ENCODE measurements at regions of chr2 and their contacts with region 1.

Region 1: GRCh38 chr2:201071479-201072200 is at the starts of genes HYCC2 and NDUFB3:
- DNase-seq: peak; percentile 93
- ATAC-seq: peak; percentile 98
- H3K4me3 ChIP-seq: peak within 1 kb of the TSS; percentile 94
- H3K27ac ChIP-seq: peak within 1 kb of the TSS; percentile 68
- H3K4me1 ChIP-seq: no peaks in the 10 kb centered on the region
- H3K27me3 ChIP-seq: no peaks in the 10 kb centered on the region
- CTCF ChIP-seq: no peak; the same call in 1 of the 2 replicates
- POLR2A ChIP-seq: 0 out of 2 replicates have a peak, but pooled peaks have one; percentile 30
- RAD21 ChIP-seq: peak; percentile 23; the same call in 1 of the 2 replicates
- total RNA-seq, gene HYCC2: 9.1 and 10.0 TPM in 2 replicates
- total RNA-seq, gene NDUFB3: 41.0 and 105 TPM in 2 replicates

Region 2: GRCh38 chr2:200901459-200902072 is 170.1 kb before region 1 on chr2:
- CTCF ChIA-PET with region 1: interaction called, 12 read pairs
- POLR2A ChIA-PET with region 1: no interaction called
- dilution Hi-C with region 1: no loop called
- in situ Hi-C with region 1: loop called (anchors 5 kb)
- intact Hi-C with region 1: loop called (anchors 1 kb)
- DNase-seq: peak; percentile 90
- ATAC-seq: peak; percentile 98
- H3K4me3 ChIP-seq: no peak overlapping the region
- H3K27ac ChIP-seq: no peak overlapping the region
- H3K4me1 ChIP-seq: no peaks in the 10 kb centered on the region
- H3K27me3 ChIP-seq: no peaks in the 10 kb centered on the region
- CTCF ChIP-seq: peak; percentile 93
- POLR2A ChIP-seq: no peak
- RAD21 ChIP-seq: peak; percentile 83

Region 3: GRCh38 chr2:201021914-201022313 is 49.7 kb before region 1 on chr2:
- CTCF ChIA-PET with region 1: no interaction called
- POLR2A ChIA-PET with region 1: no interaction called
- dilution Hi-C with region 1: no loop called
- in situ Hi-C with region 1: no loop called
- intact Hi-C with region 1: no loop called
- DNase-seq: no peak
- ATAC-seq: no peak; the same call in 1 of the 2 replicates
- H3K4me3 ChIP-seq: no peak overlapping the region
- H3K27ac ChIP-seq: no peak overlapping the region
- H3K4me1 ChIP-seq: peaks cover under 1% of the 10 kb centered on the region; the same call in 1 of the 2 replicates
- H3K27me3 ChIP-seq: no peaks in the 10 kb centered on the region
- CTCF ChIP-seq: no peak
- POLR2A ChIP-seq: no peak
- RAD21 ChIP-seq: no peak

Region 4: GRCh38 chr2:201118121-201118960 is 46.7 kb after region 1 on chr2:
- CTCF ChIA-PET with region 1: no interaction called
- POLR2A ChIA-PET with region 1: no interaction called
- dilution Hi-C with region 1: no loop called
- in situ Hi-C with region 1: no loop called
- intact Hi-C with region 1: loop called (anchors 5 kb)
- DNase-seq: peak; percentile 78
- ATAC-seq: peak; percentile 35
- H3K4me3 ChIP-seq: peak overlapping the region; percentile 64
- H3K27ac ChIP-seq: peak overlapping the region; percentile 92
- H3K4me1 ChIP-seq: peaks cover 4% of the 10 kb centered on the region
- H3K27me3 ChIP-seq: no peaks in the 10 kb centered on the region
- CTCF ChIP-seq: peak; percentile 56
- POLR2A ChIP-seq: no peak
- RAD21 ChIP-seq: peak; percentile 42; the same call in 1 of the 2 replicates

Region 5: GRCh38 chr2:201171259-201171814 is 99.7 kb after region 1 on chr2:
- CTCF ChIA-PET with region 1: no interaction called
- POLR2A ChIA-PET with region 1: no interaction called
- dilution Hi-C with region 1: no loop called
- in situ Hi-C with region 1: no loop called
- intact Hi-C with region 1: loop called (anchors 5 kb)
- DNase-seq: no peak
- ATAC-seq: no peak
- H3K4me3 ChIP-seq: no peak overlapping the region
- H3K27ac ChIP-seq: no peak overlapping the region
- H3K4me1 ChIP-seq: no peaks in the 10 kb centered on the region
- H3K27me3 ChIP-seq: no peaks in the 10 kb centered on the region
- CTCF ChIP-seq: no peak
- POLR2A ChIP-seq: no peak
- RAD21 ChIP-seq: no peak

Measured in IMR-90 (cell line).